ENCODE measurements at regions of chr11 and their contacts with region 1.

Region 1: DNA sequence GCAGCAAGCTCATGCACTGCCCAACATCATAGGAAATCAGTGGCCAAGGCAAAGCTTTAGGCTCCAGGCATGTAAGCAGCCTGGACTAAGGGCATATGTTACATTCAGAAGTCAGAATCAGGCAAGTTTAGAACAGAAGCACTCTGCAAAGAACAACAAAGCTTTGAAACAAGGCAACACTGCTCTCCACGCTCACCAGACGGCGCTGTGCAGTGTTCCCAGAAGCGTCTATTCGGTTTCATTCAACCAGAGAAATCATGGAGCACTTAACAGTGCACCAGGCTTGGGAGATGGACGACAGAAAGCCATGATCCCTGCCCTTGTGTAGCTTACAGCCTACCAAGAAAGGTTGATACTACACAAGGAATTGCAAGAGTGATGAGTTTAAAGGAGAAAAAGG is 555.8 kb downstream of the BUD13 start:
- DNase-seq: peak; percentile 64
- ATAC-seq: peak; percentile 71

Region 2: GRCh38 chr11:116691771-116692177 is 474.8 kb after region 1 on chr11:
- intact Hi-C with region 1: loop called (anchors 5 kb)
- DNase-seq: no peak
- ATAC-seq: peak; percentile 73